Heart left ventricle (tissue), 16 donors: ENCODE measurements at regions of chr12 and their contacts with region 1.

Region 1: DNA sequence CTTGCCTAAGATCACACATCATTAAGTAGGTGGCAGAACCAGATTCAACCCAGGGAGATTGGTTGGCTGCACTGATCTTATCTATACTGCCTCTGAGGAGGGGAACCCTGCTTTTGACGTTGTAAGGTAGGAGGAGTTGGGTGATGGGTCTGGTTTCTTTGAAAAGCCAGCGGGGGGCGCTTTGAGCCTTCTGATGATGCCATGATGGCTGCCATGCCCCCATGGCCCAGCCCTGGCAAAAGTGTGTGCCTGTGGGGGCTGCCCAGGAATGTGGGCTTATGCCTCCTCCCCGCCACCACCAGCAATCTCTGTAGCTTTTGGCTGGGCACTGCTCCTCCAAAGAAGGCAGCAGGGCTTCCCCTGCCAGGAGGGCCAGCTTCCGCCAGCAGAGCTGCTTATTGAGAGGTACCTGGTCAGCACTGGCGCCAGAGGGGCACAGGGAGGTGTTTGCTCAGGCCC is 224.3 kb downstream of the SLC41A2 start:
- DNase-seq: no peak
- ATAC-seq: peak in 3 of 4 donors; percentile 40 to 50 (median 42)
- H3K4me3 ChIP-seq: no peak overlapping the region
- H3K27ac ChIP-seq: no peak overlapping the region
- H3K4me1 ChIP-seq: peaks cover 0 to 24% (median 0%) of the 10 kb centered on the region in 12 donors
- H3K27me3 ChIP-seq: no peaks in the 10 kb centered on the region
- CTCF ChIP-seq: peak in 5 of 12 donors; percentile 21 to 31 (median 27)
- POLR2A ChIP-seq: no peak

Region 2: GRCh38 chr12:104582739-104583138 is 151.0 kb before region 1 on chr12:
- intact Hi-C with region 1: no loop called
- DNase-seq: no peak
- ATAC-seq: no peak
- H3K4me3 ChIP-seq: no peak overlapping the region
- H3K27ac ChIP-seq: no peak overlapping the region
- H3K4me1 ChIP-seq: peaks cover 0 to 42% (median 0%) of the 10 kb centered on the region in 12 donors
- H3K27me3 ChIP-seq: no peaks in the 10 kb centered on the region
- CTCF ChIP-seq: no peak
- POLR2A ChIP-seq: no peak

Region 3: GRCh38 chr12:104846056-104846767 is 112.5 kb after region 1 on chr12:
- intact Hi-C with region 1: loop called in 1 of 10 experiments (anchors 10 kb)
- DNase-seq: no peak
- ATAC-seq: no peak
- H3K4me3 ChIP-seq: no peak overlapping the region
- H3K27ac ChIP-seq: no peak overlapping the region
- H3K4me1 ChIP-seq: peaks cover 0 to 4% (median 0%) of the 10 kb centered on the region in 12 donors
- H3K27me3 ChIP-seq: no peaks in the 10 kb centered on the region
- CTCF ChIP-seq: no peak
- POLR2A ChIP-seq: no peak

Region 4: GRCh38 chr12:105084251-105085250 is 350.8 kb after region 1 on chr12 and contains the start of gene ALDH1L2:
- intact Hi-C with region 1: no loop called
- DNase-seq: peak; percentile 81 to 91 (median 85)
- ATAC-seq: peak; percentile 82 to 99 (median 94)
- H3K4me3 ChIP-seq: peak within 1 kb of the TSS; percentile 37 to 69 (median 59)
- H3K27ac ChIP-seq: peak within 1 kb of the TSS in 8 of 12 donors; percentile 7 to 70 (median 54)
- H3K4me1 ChIP-seq: peaks cover 0 to 18% (median 7%) of the 10 kb centered on the region in 12 donors
- H3K27me3 ChIP-seq: peaks cover 0 to 5% (median 0%) of the 10 kb centered on the region in 9 donors
- CTCF ChIP-seq: peak in 1 of 12 donors; percentile 13
- POLR2A ChIP-seq: peak in 1 of 2 donors; percentile 20
- total RNA-seq, gene ALDH1L2: 0.81 to 6.7 (median 2.0) TPM

Region 5: GRCh38 chr12:105107494-105108371 is 374.0 kb after region 1 on chr12 and contains the start of gene WASHC4:
- intact Hi-C with region 1: no loop called
- DNase-seq: peak; percentile 96 to 98 (median 96)
- ATAC-seq: peak; percentile 98 to 99 (median 98)
- H3K4me3 ChIP-seq: peak within 1 kb of the TSS; percentile 64 to 99 (median 84)
- H3K27ac ChIP-seq: peak within 1 kb of the TSS; percentile 84 to 99 (median 96)
- H3K4me1 ChIP-seq: peaks cover 5 to 55% (median 27%) of the 10 kb centered on the region in 12 donors
- H3K27me3 ChIP-seq: no peaks in the 10 kb centered on the region
- CTCF ChIP-seq: no peak
- POLR2A ChIP-seq: peak; percentile 13 to 97
- total RNA-seq, gene WASHC4: 15.3 to 42.9 (median 25.3) TPM